WTC11 (cell line): ENCODE measurements at regions of chr12 and their contacts with region 1.

Region 1: DNA sequence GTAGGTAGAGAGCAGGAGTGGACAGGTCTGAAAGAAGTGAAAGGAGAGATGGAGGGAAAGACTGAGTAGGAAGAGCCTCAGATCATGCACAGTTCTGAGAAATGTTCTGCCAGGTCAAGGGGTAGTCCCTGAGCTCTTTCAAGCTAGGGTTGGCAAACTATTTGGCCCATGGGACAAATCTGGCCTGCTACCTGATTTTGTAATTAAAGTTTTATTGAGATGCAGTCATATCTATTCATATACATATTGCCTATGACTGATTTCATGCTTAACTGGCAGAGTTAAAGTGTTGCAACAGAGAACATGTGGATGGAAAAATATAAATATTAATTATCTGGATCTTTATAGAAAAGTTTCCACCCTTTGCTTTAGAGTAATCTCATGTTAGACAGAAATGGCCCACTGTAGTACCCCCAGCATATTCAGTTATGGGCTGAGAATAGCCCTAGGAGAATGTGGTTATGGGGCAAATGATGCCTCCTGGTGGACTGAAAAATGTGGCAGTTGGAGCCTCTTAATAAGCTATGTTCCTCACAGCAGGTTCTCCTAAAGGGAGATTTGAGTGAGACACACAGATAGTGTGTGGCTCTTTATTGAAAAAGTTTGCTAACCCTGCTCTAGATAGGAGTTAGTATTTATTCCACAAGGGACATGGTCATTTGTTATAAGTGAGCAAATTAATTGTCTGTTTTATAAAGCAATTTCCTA is 476.9 kb downstream of the LRIG3 start:
- DNase-seq: peak; percentile 29
- ATAC-seq: peak; percentile 93
- H3K4me3 Mint-ChIP-seq: no peak overlapping the region
- H3K27ac Mint-ChIP-seq: no peak overlapping the region
- H3K4me1 Mint-ChIP-seq: peaks cover 6% of the 10 kb centered on the region
- H3K27me3 Mint-ChIP-seq: no peaks in the 10 kb centered on the region
- CTCF ChIP-seq: peak; percentile 50; the same call in 1 of the 2 replicates

Region 2: DNA sequence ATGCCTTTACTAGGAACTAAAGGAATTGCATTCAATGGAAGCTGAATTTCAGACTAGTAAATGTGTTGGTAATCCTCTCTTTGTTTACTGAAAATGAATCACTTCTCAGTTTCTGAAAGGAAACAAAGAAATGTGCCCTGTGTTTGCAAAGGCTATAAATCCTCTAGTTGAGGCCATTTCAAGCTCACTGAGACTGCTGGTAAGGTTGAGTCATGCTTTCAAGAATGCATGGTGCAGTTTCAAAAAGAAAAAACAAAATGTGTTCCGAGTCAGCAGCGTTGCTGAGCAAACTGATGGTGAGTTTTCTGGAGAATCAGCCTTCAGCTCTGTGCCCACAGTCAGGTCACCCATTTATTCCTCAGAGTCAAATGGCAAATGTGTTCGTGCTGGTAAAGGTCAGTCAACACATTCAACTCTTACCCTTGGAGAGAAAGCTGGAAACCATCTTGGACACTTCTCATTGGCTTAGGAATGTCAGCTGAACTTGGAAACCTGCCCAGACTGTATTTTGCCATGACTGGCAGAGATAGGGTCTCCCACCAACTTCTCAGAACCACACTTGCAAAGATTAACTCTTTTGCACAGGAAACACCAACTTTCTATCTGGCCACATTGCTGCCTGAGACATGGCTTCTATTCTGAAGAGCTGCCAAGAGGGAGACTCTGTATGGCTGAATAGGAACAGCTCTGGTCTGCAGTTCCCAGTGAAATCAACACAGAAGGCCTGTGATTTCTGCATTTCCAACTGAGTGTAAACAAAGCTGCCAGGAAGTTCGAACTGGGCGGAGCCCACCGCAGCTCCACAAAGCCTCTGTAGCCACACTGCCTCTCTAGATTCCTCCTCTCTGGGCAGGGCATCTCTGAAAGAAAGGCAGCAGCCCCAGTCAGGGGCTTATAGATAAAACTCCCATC is 17.7 kb before region 1 on chr12:
- CTCF ChIA-PET with region 1: interaction called, 10 read pairs
- POLR2A ChIA-PET with region 1: no interaction called
- DNase-seq: peak; percentile 46
- ATAC-seq: peak; percentile 95
- H3K4me3 Mint-ChIP-seq: 0 out of 2 replicates have a peak overlapping the region, but pooled peaks have one; percentile 4
- H3K27ac Mint-ChIP-seq: peak overlapping the region; percentile 88
- H3K4me1 Mint-ChIP-seq: peaks cover 50% of the 10 kb centered on the region
- H3K27me3 Mint-ChIP-seq: no peaks in the 10 kb centered on the region; the same call in 1 of the 2 replicates
- CTCF ChIP-seq: no peak